Activated CD4-positive, alpha-beta T cell treated with anti-CD3 and anti-CD28 coated beads for 36 hours (primary cell): ENCODE measurements at regions of chr15 and their contacts with region 1.

Region 1: DNA sequence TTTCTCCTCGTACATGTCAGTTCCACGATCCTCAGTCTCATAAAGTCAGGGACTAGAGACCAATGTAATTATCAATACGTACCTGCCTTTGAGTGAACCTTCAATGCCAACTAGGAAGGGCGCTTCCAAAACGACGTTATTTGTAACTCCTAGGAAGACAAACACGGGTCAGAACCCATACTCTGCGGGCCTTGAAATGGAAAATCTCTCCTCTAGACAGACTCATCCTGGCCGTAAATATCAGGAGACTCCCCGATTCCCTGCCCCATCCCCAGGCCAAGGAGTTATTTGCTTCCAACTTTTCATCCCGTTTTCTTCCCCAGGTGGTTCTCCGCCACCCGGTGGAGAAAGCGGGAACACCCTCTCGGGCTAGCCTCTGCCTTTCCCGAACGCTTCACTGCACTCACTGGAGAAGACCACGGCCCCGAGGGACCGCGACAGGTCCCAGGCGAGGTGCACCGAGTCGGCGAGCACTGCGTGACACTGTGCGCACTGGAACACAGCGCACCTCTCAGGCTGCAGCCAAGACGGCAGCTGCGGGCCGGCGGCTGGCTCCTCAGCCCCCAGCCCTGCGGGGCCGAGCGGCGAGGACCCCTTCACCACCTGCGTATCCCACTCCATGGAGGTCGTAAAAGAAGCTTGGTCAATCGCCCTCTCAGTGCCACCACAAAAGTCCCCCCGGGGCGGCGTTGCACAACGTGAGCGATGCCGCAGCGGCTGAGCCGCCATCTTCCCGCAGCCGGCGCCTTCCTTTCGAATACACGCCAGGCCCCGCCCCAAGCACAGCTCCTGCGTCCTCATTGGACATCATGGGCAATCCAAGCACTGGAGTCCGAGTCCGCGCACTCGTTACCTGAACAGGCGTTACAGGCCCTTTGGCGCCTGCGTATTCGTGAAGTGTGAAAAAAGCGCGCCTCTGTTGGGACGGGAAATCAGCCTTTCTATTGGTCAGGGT is at the start of gene OIP5:
- DNase-seq: peak; percentile 99
- ATAC-seq: peak; percentile 98
- H3K4me3 Mint-ChIP-seq: peak within 1 kb of the TSS; percentile 91
- H3K27ac Mint-ChIP-seq: peak within 1 kb of the TSS; percentile 92
- H3K4me1 Mint-ChIP-seq: peaks cover 26% of the 10 kb centered on the region
- H3K27me3 Mint-ChIP-seq: no peaks in the 10 kb centered on the region
- total RNA-seq, gene OIP5: 11.5 to 14.0 TPM

Region 2: GRCh38 chr15:40564591-40565332 is 767.3 kb before region 1 on chr15 and contains the start of gene CCDC32:
- CTCF ChIA-PET with region 1: no interaction called
- POLR2A ChIA-PET with region 1: no interaction called
- intact Hi-C with region 1: loop called in 1 of 2 experiments (anchors 2 kb)
- DNase-seq: peak; percentile 97
- ATAC-seq: peak; percentile 97
- H3K4me3 Mint-ChIP-seq: peak within 1 kb of the TSS; percentile 96
- H3K27ac Mint-ChIP-seq: peak within 1 kb of the TSS; percentile 93
- H3K4me1 Mint-ChIP-seq: peaks cover 44% of the 10 kb centered on the region
- H3K27me3 Mint-ChIP-seq: no peaks in the 10 kb centered on the region
- total RNA-seq, gene CCDC32: 14.2 to 24.5 TPM

Region 3: GRCh38 chr15:41276821-41277220 is 55.3 kb before region 1 on chr15:
- CTCF ChIA-PET with region 1: no interaction called
- POLR2A ChIA-PET with region 1: no interaction called
- intact Hi-C with region 1: no loop called
- DNase-seq: no peak
- ATAC-seq: no peak
- H3K4me3 Mint-ChIP-seq: no peak overlapping the region
- H3K27ac Mint-ChIP-seq: no peak overlapping the region
- H3K4me1 Mint-ChIP-seq: no peaks in the 10 kb centered on the region
- H3K27me3 Mint-ChIP-seq: no peaks in the 10 kb centered on the region

Region 4: DNA sequence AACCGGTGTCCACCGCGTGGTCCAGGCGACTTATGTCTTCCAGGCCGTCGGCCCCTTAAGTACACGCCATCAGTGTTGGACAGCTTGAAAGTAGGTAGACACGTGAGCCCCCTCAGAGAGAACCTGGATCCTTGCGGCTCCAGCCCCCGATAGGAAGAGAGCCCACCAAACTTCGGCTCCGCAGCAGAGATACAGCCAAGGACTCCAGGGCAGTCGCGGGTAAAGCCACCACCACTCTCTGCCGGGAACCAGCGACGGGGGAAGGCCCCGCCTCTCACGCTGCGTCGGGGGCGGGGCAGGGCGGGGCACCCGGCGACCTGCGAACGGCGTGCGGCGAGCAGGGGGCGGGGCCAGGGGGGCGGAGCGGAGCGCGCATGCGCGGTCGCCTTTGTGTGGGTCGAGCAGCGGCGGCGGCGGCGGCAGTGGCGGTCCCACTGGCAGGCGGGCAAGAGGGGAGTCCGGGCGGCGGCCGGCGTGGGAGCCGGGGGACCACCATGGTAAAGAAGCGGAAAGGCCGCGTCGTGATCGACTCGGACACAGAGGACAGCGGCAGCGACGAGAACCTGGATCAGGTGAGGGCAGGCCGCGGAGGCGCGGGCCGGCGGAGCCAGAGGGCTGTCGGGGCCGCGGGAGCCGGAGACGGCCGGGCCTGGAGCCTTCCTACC is 84.8 kb after region 1 on chr15 and contains the start of gene RTF1:
- CTCF ChIA-PET with region 1: no interaction called
- POLR2A ChIA-PET with region 1: no interaction called
- intact Hi-C with region 1: loop called (anchors 1 kb)
- DNase-seq: peak; percentile 98
- ATAC-seq: peak; percentile 94
- H3K4me3 Mint-ChIP-seq: peak within 1 kb of the TSS; percentile 88
- H3K27ac Mint-ChIP-seq: peak within 1 kb of the TSS; percentile 92
- H3K4me1 Mint-ChIP-seq: peaks cover 38% of the 10 kb centered on the region
- H3K27me3 Mint-ChIP-seq: no peaks in the 10 kb centered on the region
- total RNA-seq, gene RTF1: 29.4 to 32.3 TPM